ENCODE measurements at regions of chr11 and their contacts with region 1.

Region 1: GRCh38 chr11:37230865-37231264 is 632.8 kb upstream of the RAG2 start:
- DNase-seq: no peak
- H3K4me3 ChIP-seq: no peak overlapping the region
- CTCF ChIP-seq: peak; percentile 12

Region 2: GRCh38 chr11:36890121-36890679 is 340.7 kb before region 1 on chr11:
- in situ Hi-C with region 1: no loop called
- DNase-seq: no peak
- H3K4me3 ChIP-seq: no peak overlapping the region
- CTCF ChIP-seq: no peak

Region 3: GRCh38 chr11:37072538-37073055 is 158.3 kb before region 1 on chr11:
- in situ Hi-C with region 1: no loop called
- DNase-seq: no peak
- H3K4me3 ChIP-seq: no peak overlapping the region
- CTCF ChIP-seq: no peak

Region 4: GRCh38 chr11:37199082-37199481 is 31.8 kb before region 1 on chr11:
- in situ Hi-C with region 1: loop called (anchors 5 kb)
- DNase-seq: no peak
- H3K4me3 ChIP-seq: no peak overlapping the region
- CTCF ChIP-seq: no peak